HepG2 (cell line): ENCODE measurements at regions of chr21 and their contacts with region 1.

Region 1: GRCh38 chr21:45357436-45358260 is 47.3 kb upstream of the COL18A1 start:
- DNase-seq: no peak
- ATAC-seq: peak; percentile 17; the same call in 2 of the 3 replicates
- H3K4me3 ChIP-seq: no peak overlapping the region
- H3K27ac ChIP-seq: peak overlapping the region; percentile 82
- H3K4me1 ChIP-seq: peaks cover 68% of the 10 kb centered on the region
- H3K27me3 ChIP-seq: no peaks in the 10 kb centered on the region
- CTCF ChIP-seq: no peak
- EP300 ChIP-seq: no peak
- POLR2A ChIP-seq: no peak
- RAD21 ChIP-seq: 0 out of 2 replicates have a peak, but pooled peaks have one; percentile 12

Region 2: GRCh38 chr21:45439161-45439872 is 81.7 kb after region 1 on chr21:
- CTCF ChIA-PET with region 1: interaction called, 11 read pairs
- POLR2A ChIA-PET with region 1: no interaction called
- in situ Hi-C with region 1: no loop called
- intact Hi-C with region 1: no loop called
- DNase-seq: peak; percentile 59
- ATAC-seq: peak; percentile 75
- H3K4me3 ChIP-seq: 0 out of 6 replicates have a peak overlapping the region, but pooled peaks of 1 of the 3 experiments have one; percentile 5
- H3K27ac ChIP-seq: no peak overlapping the region
- H3K4me1 ChIP-seq: peaks cover 31% of the 10 kb centered on the region
- H3K27me3 ChIP-seq: no peaks in the 10 kb centered on the region
- CTCF ChIP-seq: peak; percentile 97
- EP300 ChIP-seq: 0 out of 4 replicates have a peak, but pooled peaks of 1 of the 2 experiments have one; percentile 5
- POLR2A ChIP-seq: no peak
- RAD21 ChIP-seq: peak; percentile 99